PC-9 (cell line): ENCODE measurements at regions of chr7 and their contacts with region 1.

Region 1: GRCh38 chr7:2870471-2870931 is 26.4 kb upstream of the GNA12 start:
- DNase-seq: peak; percentile 48 to 81
- H3K4me3 ChIP-seq: no peak overlapping the region
- H3K27ac ChIP-seq: no peak overlapping the region
- H3K4me1 ChIP-seq: peaks cover 17% of the 10 kb centered on the region
- H3K27me3 ChIP-seq: no peaks in the 10 kb centered on the region
- CTCF ChIP-seq: no peak

Region 2: DNA sequence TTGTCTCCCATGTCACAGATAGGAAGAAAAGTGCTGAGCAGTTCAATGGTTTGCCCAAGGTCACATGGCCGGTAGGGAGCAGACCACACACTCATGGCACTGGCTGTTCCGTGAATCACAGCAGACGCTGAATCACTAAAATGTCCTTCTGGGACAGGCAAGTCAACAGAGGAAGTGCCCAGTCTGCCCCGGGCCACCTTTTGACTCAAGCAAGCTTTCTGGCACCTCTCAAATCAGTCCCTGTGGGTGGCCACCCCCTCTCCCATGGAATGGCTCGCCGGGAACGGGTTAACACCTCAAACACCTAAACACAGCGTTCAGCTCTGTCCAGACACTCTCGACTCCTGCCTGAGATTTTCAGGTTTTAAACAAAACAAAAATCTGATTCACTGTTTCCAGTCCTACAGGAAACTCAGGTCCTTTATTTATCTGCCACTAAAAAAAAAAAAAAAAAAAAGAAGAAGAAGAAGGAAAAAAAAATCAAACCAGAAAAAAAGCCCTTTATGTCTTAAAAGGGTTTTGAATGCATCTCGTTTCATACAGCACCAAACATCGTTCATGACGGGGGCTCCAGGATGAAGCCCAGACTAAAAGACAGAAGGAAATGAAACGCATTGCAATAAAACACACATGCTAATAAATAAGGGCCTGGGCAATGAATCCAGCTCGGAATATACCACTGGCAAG is 157.7 kb after region 1 on chr7:
- CTCF ChIA-PET with region 1: no interaction called
- POLR2A ChIA-PET with region 1: no interaction called
- intact Hi-C with region 1: loop called (anchors 1 kb)
- DNase-seq: peak; percentile 77 to 91
- H3K4me3 ChIP-seq: peak overlapping the region; percentile 39; the same call in 1 of the 2 replicates
- H3K27ac ChIP-seq: peak overlapping the region; percentile 85
- H3K4me1 ChIP-seq: peaks cover 25% of the 10 kb centered on the region
- H3K27me3 ChIP-seq: no peaks in the 10 kb centered on the region
- CTCF ChIP-seq: no peak